Activated naive CD4-positive, alpha-beta T cell treated with anti-CD3 and anti-CD28 coated beads for 36 hours (primary cell): ENCODE measurements at regions of chr2 and their contacts with region 1.

Region 1: GRCh38 chr2:231557571-231558237 is 27.5 kb upstream of the NMUR1 start:
- DNase-seq: peak; percentile 63
- H3K4me3 Mint-ChIP-seq: no peak overlapping the region
- H3K27ac Mint-ChIP-seq: no peak overlapping the region
- H3K4me1 Mint-ChIP-seq: peaks cover 2% of the 10 kb centered on the region
- H3K27me3 Mint-ChIP-seq: no peaks in the 10 kb centered on the region

Region 2: GRCh38 chr2:231227309-231228162 is 330.2 kb before region 1 on chr2:
- CTCF ChIA-PET with region 1: no interaction called
- intact Hi-C with region 1: loop called (anchors 1 kb)
- DNase-seq: peak; percentile 73
- H3K4me3 Mint-ChIP-seq: no peak overlapping the region
- H3K27ac Mint-ChIP-seq: no peak overlapping the region
- H3K4me1 Mint-ChIP-seq: no peaks in the 10 kb centered on the region
- H3K27me3 Mint-ChIP-seq: no peaks in the 10 kb centered on the region

Region 3: DNA sequence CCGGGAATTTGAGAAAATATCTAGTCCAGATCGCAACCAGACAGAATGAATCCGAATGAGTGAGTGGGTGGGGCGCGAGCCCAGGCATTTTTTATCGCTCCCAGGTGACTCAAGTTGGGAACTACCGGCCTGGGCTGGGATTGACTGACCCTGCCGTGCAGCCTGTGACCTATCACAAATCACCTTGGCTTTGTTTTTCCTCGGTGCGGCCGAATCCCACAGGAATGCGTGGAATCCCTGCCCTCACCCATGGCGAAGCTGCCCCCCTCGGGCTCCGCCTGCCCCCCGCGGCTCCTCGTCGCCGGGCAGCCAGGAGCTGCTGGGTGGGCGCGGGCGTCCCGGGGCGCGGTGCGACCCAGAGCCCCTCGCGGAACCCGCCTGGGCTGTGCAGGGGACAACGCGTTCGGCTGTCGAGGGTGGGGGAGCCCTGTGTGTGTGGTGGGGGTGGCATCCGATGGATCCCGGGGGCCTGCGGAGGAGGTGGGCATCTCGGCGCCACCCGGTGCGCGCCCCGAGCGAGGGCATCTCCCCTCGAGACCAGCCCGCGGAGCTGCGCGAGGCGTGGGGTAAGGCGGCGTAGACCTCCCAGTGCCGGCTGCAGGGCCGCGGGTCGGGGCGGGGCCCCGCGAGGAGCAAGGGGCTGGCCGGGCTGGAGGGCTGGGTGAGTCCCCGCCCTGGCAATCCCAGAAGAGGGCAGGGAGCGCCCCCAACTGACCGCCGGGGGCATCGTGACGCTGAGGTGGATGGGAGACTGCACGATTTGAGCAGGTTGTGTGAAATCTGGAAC is 145.7 kb before region 1 on chr2:
- CTCF ChIA-PET with region 1: no interaction called
- intact Hi-C with region 1: loop called (anchors 5 kb)
- DNase-seq: peak; percentile 81
- H3K4me3 Mint-ChIP-seq: peak overlapping the region; percentile 45
- H3K27ac Mint-ChIP-seq: no peak overlapping the region
- H3K4me1 Mint-ChIP-seq: peaks cover 7% of the 10 kb centered on the region
- H3K27me3 Mint-ChIP-seq: peaks cover 33% of the 10 kb centered on the region

Region 4: DNA sequence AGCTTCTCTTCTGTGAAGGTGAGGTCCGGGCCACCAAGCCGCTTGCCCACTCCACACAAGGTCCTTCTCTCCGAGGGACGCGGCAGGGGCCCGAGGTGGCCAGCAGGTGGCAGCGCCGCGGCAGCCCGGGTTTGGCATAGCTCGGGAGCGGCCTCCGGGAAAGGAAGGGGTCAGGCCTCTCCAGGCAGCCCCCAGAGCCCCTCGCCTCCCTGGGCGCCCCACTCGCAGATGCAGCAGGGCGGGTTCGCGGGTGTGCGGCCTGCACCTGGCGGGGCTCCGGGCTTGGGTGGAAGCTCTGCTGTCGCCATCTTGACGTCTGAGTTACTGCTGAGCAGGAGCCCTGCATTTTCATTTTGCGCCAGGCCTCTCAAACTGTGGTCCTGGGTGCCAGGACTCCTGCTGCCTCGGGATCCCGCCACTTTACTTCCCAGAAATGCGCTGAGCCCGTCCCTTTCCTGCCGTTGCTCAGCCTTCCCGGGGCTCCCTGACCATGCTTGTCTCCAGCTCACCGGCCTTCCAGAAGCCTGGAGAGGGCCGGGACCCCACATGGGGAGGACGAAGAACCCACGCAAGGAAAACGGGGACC is 74.8 kb before region 1 on chr2:
- CTCF ChIA-PET with region 1: interaction called, 11 read pairs
- intact Hi-C with region 1: loop called (anchors 1 kb)
- DNase-seq: peak; percentile 78
- H3K4me3 Mint-ChIP-seq: peak overlapping the region; percentile 83
- H3K27ac Mint-ChIP-seq: peak overlapping the region; percentile 89
- H3K4me1 Mint-ChIP-seq: peaks cover 13% of the 10 kb centered on the region
- H3K27me3 Mint-ChIP-seq: no peaks in the 10 kb centered on the region

Region 5: GRCh38 chr2:231530091-231531011 is 27.4 kb before region 1 on chr2 and contains the start of gene NMUR1:
- CTCF ChIA-PET with region 1: interaction called, 11 read pairs
- intact Hi-C with region 1: loop called (anchors 1 kb)
- DNase-seq: peak; percentile 59
- H3K4me3 Mint-ChIP-seq: peak within 1 kb of the TSS; percentile 3
- H3K27ac Mint-ChIP-seq: no peak within 1 kb of the TSS
- H3K4me1 Mint-ChIP-seq: peaks cover 5% of the 10 kb centered on the region
- H3K27me3 Mint-ChIP-seq: peaks cover 15% of the 10 kb centered on the region
- total RNA-seq, gene NMUR1: not detected

Region 6: GRCh38 chr2:231621129-231621879 is 63.6 kb after region 1 on chr2:
- CTCF ChIA-PET with region 1: no interaction called
- intact Hi-C with region 1: no loop called
- DNase-seq: peak; percentile 30
- H3K4me3 Mint-ChIP-seq: no peak overlapping the region
- H3K27ac Mint-ChIP-seq: no peak overlapping the region
- H3K4me1 Mint-ChIP-seq: peaks cover 18% of the 10 kb centered on the region
- H3K27me3 Mint-ChIP-seq: no peaks in the 10 kb centered on the region